A673 (cell line): ENCODE measurements at regions of chr2 and their contacts with region 1.

Region 1: DNA sequence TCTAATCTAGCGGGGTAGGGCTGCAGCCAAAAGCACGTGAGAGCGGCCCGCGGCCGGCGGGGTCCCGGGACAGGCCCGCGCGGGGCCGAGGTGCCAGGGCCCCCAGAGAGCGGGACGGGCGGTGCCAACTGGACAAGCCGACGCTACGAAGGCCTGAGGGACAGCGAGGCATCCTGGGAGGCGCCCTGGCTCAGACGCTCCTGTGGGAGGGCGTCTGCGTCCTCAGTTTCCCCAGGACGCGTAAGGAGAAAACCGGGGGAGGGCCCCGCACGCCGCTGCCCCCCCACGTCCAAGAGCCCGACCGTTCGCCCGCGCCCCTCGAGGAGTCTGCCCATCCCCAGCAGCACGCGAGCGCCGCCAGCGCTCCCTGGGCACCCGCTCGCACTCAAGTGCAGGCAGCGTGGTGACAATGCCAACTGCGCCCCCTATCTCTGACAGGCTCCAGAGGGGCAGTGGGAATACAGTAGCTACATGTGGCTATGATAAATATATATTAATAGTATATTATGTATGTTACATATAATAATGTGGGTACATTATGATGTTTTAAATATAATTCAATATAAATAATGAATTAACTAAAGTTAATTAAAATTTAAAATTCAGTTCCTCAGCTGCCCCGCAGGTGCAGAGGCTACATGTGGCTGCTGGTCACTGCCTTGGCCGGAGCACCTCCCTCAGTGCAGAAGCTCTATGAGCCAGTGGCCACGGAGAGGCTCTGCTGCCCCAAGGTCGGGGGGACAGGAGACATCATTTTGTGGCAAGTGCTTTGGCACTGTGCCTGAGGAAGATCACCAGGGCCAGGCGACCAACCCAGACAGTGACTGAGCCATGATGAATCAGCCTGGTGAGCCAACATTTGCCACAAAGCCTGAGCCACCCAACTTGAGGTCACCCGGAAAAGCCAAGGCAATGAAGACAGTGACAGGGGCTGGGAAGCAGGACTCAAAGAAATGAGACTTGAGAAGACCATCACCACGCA is 5.5 kb upstream of the SFT2D3 start:
- DNase-seq: peak; percentile 60
- H3K4me3 ChIP-seq: peak overlapping the region; percentile 12
- H3K27ac ChIP-seq: no peak overlapping the region
- H3K4me1 ChIP-seq: peaks cover 3% of the 10 kb centered on the region
- H3K27me3 ChIP-seq: no peaks in the 10 kb centered on the region
- CTCF ChIP-seq: peak; percentile 59

Region 2: GRCh38 chr2:127094509-127095366 is 601.0 kb before region 1 on chr2:
- CTCF ChIA-PET with region 1: no interaction called
- POLR2A ChIA-PET with region 1: no interaction called
- intact Hi-C with region 1: no loop called
- DNase-seq: no peak
- H3K4me3 ChIP-seq: no peak overlapping the region
- H3K27ac ChIP-seq: no peak overlapping the region
- H3K4me1 ChIP-seq: no peaks in the 10 kb centered on the region
- H3K27me3 ChIP-seq: no peaks in the 10 kb centered on the region
- CTCF ChIP-seq: no peak

Region 3: DNA sequence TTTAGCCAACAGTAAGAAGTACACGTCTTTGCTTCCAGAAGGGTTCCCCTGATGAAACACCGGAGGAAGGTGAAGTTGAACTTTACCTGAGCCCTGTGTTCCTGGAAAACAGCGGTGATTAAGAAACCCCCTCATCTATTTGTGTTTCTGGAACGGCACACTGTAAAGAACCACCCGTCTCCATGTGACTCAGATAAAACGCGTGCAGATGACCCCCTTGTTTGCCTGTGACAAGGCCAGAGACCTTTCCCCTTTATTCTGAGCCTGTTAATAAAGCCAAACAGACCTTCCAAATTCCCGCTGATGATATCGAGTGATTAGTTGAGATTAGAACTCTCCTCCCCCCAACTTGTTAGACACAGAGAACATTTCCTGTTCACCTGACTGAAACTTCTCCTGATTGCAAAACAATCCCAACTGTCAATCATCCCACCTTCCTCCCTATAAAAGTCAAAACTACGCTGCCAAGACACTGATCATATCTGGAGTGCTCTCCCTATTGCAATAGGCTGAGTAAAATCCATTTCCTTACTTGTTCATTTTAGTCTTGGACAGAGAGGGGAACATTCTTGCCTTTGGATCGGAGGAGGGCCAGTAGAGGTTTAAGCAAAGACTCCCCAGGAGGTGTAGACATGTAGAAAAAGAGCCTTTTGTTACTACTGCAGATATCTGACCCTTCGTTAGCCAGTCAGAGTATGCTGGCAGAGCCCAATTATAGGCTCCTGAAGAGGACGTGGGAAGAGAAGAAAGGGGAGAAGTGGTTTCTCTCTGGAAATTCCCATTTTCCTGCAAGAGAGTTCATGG is 168.6 kb before region 1 on chr2:
- CTCF ChIA-PET with region 1: no interaction called
- POLR2A ChIA-PET with region 1: interaction called, 16 read pairs
- intact Hi-C with region 1: no loop called
- DNase-seq: no peak
- H3K4me3 ChIP-seq: peak overlapping the region; percentile 82
- H3K27ac ChIP-seq: peak overlapping the region; percentile 98
- H3K4me1 ChIP-seq: peaks cover 7% of the 10 kb centered on the region
- H3K27me3 ChIP-seq: no peaks in the 10 kb centered on the region
- CTCF ChIP-seq: no peak; the same call in 1 of the 2 replicates

Region 4: GRCh38 chr2:127810619-127811396 is 115.0 kb after region 1 on chr2 and contains the start of gene WDR33:
- CTCF ChIA-PET with region 1: no interaction called
- POLR2A ChIA-PET with region 1: interaction called, 13 read pairs
- intact Hi-C with region 1: loop called (anchors 5 kb)
- DNase-seq: peak; percentile 96
- H3K4me3 ChIP-seq: peak within 1 kb of the TSS; percentile 81
- H3K27ac ChIP-seq: peak within 1 kb of the TSS; percentile 95
- H3K4me1 ChIP-seq: peaks cover 17% of the 10 kb centered on the region
- H3K27me3 ChIP-seq: no peaks in the 10 kb centered on the region
- CTCF ChIP-seq: no peak
- total RNA-seq, gene WDR33: 83.8 and 87.1 TPM in 2 replicates